ENCODE measurements at regions of chr3 and their contacts with region 1.

Region 1: GRCh38 chr3:98977520-98977919 is 76.0 kb upstream of the DCBLD2 start:
- DNase-seq: no peak
- ATAC-seq: peak; percentile 39

Region 2: GRCh38 chr3:98460220-98460619 is 517.3 kb before region 1 on chr3:
- intact Hi-C with region 1: no loop called
- DNase-seq: no peak
- ATAC-seq: no peak

Region 3: DNA sequence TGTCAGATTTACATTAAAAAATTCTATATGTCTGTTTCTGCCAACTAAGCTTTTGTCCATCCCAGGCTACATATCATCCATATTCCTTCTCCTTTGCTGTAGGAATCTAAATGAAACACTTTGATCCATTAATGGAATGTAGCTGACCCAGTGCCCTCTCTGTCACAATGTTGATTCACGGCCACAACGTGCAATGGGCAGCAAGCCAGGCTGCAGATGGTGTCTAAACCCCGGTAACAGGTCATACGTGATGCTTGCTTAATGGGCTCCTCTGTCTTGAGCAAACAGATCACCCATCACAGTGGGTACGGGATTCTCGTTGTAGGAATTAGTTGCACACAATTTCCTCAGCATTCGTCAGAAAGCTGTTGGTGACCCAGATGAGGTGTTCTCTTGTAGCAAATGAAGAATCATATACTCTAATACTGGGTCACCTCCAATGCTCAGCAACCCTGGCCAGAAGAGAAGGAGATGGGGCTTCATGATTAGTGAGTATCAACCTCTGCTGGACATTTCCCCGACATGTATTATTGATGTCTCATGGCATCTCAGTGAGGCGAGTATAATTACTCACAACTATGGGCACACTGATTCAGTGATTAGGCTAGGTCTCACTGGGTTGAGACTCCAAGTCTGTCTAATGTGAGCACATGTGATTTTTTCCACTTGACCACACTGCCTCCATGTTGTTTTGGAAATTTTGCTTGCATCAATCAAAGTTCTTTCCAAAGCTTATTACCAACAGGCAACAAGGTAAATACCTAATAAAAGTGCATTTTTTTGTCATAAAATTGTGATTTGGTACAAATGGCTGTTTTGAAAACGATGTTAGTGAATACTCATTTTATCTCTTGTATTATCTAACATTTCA is 63.1 kb before region 1 on chr3:
- intact Hi-C with region 1: loop called (anchors 10 kb)
- DNase-seq: peak; percentile 27
- ATAC-seq: no peak

Region 4: DNA sequence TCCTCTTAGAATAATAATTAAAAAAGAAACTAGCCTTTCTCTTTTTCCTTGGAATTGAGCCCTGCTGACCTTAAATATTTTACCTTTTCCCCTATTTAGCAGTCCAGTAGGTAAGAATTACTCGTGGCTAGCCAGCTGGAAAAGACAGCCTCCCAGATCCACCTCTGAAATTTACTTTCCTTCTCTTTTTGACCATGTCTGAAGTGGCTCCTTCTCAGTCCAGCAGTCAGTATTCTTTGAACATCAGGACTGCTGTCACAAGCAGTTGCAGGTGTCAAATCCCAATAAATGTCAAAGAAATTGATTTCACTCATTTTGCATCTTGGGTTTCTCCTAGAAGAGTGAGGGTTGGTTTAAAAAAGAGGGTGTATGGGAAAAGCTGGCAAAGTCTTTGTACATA is 235.5 kb after region 1 on chr3:
- intact Hi-C with region 1: no loop called
- DNase-seq: no peak
- ATAC-seq: no peak